Activated CD4-positive, alpha-beta memory T cell treated with anti-CD3 and anti-CD28 coated beads for 36 hours (primary cell): ENCODE measurements at regions of chr3 and their contacts with region 1.

Region 1: DNA sequence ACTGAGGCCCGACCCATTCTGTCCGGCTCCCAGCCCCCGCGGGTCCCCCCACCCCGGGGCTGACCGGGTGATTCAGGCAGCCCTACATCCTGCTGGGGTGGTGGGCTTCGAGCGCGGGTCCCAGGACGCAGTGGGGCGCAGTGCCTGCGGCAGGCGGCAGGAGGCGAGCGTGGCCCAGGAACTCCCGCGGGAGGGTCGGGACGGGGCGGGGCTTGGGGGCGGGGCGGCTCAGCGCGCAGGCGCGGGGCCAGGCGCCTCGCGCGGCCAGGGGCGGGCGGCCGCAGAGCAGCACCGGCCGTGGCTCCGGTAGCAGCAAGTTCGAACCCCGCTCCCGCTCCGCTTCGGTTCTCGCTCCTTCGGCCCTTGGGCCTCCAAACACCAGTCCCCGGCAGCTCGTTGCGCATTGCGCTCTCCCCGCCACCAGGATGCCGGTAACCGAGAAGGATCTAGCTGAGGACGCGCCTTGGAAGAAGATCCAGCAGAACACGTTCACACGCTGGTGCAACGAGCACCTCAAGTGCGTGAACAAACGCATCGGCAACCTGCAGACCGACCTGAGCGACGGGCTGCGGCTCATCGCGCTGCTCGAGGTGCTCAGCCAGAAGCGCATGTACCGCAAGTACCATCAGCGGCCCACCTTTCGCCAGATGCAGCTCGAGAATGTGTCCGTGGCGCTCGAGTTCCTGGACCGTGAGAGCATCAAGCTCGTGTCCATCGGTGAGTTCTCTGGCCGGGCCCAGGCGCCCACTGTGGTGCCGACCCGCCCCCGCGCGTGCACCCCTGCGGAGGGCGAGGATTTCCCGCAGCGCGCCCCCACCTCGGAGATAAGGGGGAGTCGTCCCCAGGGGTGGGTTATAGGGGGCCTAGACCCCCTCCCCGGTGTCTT is at the start of gene FLNB:
- DNase-seq: peak; percentile 87
- H3K4me3 Mint-ChIP-seq: peak within 1 kb of the TSS; percentile 91
- H3K27ac Mint-ChIP-seq: peak within 1 kb of the TSS; percentile 71
- H3K4me1 Mint-ChIP-seq: peaks cover 25% of the 10 kb centered on the region
- H3K27me3 Mint-ChIP-seq: no peaks in the 10 kb centered on the region
- total RNA-seq, gene FLNB: 23.1 to 26.0 TPM

Region 2: GRCh38 chr3:57755668-57756527 is 252.5 kb before region 1 on chr3 and contains the start of gene SLMAP:
- CTCF ChIA-PET with region 1: no interaction called
- POLR2A ChIA-PET with region 1: no interaction called
- intact Hi-C with region 1: no loop called
- DNase-seq: peak; percentile 98
- H3K4me3 Mint-ChIP-seq: peak within 1 kb of the TSS; percentile 97
- H3K27ac Mint-ChIP-seq: peak within 1 kb of the TSS; percentile 98
- H3K4me1 Mint-ChIP-seq: peaks cover 36% of the 10 kb centered on the region
- H3K27me3 Mint-ChIP-seq: no peaks in the 10 kb centered on the region
- total RNA-seq, gene SLMAP: 42.5 to 43.9 TPM

Region 3: DNA sequence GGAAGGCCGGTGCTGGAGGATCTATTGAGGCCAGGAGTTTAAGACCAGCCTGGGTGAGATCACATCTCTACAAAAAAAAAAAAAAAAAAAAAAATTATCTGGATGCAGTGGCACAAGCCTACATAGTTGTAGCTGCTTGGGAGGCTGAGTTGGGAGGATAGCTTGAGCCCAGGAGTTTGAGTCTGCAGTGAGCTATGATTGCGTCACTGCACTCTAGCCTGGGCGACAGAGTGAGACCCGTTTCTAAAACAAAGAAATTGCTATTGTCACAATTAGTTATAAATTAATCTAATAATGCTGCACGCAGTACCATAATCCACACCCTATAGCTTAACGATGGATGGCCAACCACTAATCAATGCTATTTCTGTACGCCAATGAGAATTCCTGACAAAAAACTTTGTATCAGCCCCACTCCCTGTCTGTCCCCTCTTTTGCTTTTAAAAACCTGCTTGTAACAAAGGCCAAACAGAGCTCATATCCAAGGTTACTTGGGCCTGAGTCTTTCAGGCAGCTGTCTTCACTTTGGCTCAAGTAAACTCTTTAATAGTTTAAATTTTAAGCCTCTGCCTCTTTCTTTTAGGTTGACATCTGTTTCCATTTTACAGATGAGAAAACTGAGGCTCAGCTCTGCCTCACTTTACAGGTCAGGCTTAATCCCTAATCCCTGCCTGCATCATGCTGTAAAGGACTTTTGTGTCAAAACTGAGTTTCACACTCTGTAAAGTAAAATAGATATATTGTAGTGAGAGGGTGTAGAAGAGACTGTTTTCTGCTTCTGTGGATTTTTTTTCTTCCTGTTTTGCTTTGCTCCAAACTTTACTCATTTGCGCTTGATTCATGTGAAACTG is 10.7 kb after region 1 on chr3:
- CTCF ChIA-PET with region 1: interaction called, 15 read pairs
- POLR2A ChIA-PET with region 1: interaction called, 6 read pairs
- intact Hi-C with region 1: no loop called
- DNase-seq: no peak
- H3K4me3 Mint-ChIP-seq: no peak overlapping the region
- H3K27ac Mint-ChIP-seq: peak overlapping the region; percentile 33
- H3K4me1 Mint-ChIP-seq: peaks cover 37% of the 10 kb centered on the region
- H3K27me3 Mint-ChIP-seq: no peaks in the 10 kb centered on the region

Region 4: GRCh38 chr3:58025837-58026569 is 17.6 kb after region 1 on chr3:
- CTCF ChIA-PET with region 1: interaction called, 12 read pairs
- POLR2A ChIA-PET with region 1: interaction called, 6 read pairs
- intact Hi-C with region 1: loop called (anchors 2 kb)
- DNase-seq: no peak
- H3K4me3 Mint-ChIP-seq: no peak overlapping the region
- H3K27ac Mint-ChIP-seq: no peak overlapping the region
- H3K4me1 Mint-ChIP-seq: peaks cover 47% of the 10 kb centered on the region
- H3K27me3 Mint-ChIP-seq: no peaks in the 10 kb centered on the region

Region 5: GRCh38 chr3:58073301-58074108 is 65.1 kb after region 1 on chr3:
- CTCF ChIA-PET with region 1: interaction called, 3 read pairs
- POLR2A ChIA-PET with region 1: no interaction called
- intact Hi-C with region 1: loop called (anchors 2 kb)
- DNase-seq: no peak
- H3K4me3 Mint-ChIP-seq: no peak overlapping the region
- H3K27ac Mint-ChIP-seq: no peak overlapping the region
- H3K4me1 Mint-ChIP-seq: peaks cover 22% of the 10 kb centered on the region
- H3K27me3 Mint-ChIP-seq: no peaks in the 10 kb centered on the region

Region 6: GRCh38 chr3:58167431-58168351 is 159.3 kb after region 1 on chr3:
- CTCF ChIA-PET with region 1: interaction called, 42 read pairs
- POLR2A ChIA-PET with region 1: interaction called, 3 read pairs
- intact Hi-C with region 1: no loop called
- DNase-seq: peak; percentile 76
- H3K4me3 Mint-ChIP-seq: no peak overlapping the region
- H3K27ac Mint-ChIP-seq: no peak overlapping the region
- H3K4me1 Mint-ChIP-seq: no peaks in the 10 kb centered on the region
- H3K27me3 Mint-ChIP-seq: no peaks in the 10 kb centered on the region

Region 7: GRCh38 chr3:58177747-58178527 is 169.6 kb after region 1 on chr3:
- CTCF ChIA-PET with region 1: interaction called, 10 read pairs
- POLR2A ChIA-PET with region 1: no interaction called
- intact Hi-C with region 1: loop called (anchors 1 kb)
- DNase-seq: peak; percentile 92
- H3K4me3 Mint-ChIP-seq: peak overlapping the region; percentile 39
- H3K27ac Mint-ChIP-seq: no peak overlapping the region
- H3K4me1 Mint-ChIP-seq: peaks cover 11% of the 10 kb centered on the region
- H3K27me3 Mint-ChIP-seq: no peaks in the 10 kb centered on the region